Activated CD8-positive, alpha-beta T cell treated with anti-CD3 and anti-CD28 coated beads for 36 hours (primary cell): ENCODE measurements at regions of chr16 and their contacts with region 1.

Region 1: DNA sequence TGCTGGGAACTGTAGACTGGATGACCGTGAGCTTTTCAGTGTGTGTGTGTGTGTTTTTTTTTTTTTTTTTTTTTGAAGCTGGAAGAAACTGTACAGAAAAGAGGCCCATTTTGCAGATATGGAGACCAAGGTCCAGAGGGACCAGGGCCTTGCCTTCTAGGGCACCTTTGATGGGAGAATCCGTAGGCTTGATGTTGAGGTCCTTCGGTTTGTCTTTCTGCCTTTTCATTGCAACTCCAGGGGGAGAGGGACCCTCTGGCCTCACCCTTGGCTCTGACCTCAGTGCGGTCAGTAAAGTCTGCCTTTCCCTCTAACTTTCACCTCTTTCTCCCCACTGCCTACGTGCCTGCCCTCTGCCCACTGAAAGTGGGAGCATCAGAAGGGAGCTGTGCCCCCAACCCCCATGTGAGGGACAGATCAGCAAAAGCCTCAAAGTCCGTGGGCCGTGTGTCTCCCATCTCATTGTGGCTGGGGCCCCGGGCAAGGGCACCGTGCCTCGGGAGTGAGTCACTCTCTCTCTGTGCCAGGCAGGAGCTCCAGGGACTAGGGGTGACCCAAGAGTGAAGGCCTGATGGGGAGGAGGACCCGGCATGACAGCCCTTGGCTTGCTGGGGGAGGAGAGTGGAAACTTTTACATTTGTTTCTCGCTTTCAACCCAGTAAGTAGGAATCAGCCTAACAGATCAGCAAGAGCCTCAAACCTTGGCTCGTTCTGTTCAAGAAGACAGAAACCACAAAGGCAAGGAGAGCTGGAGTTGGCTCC is 123.6 kb downstream of the CMIP start:
- DNase-seq: peak; percentile 83
- ATAC-seq: peak; percentile 97
- H3K4me3 Mint-ChIP-seq: peak overlapping the region; percentile 3
- H3K27ac Mint-ChIP-seq: peak overlapping the region; percentile 89
- H3K4me1 Mint-ChIP-seq: peaks cover 31% of the 10 kb centered on the region
- H3K27me3 Mint-ChIP-seq: no peaks in the 10 kb centered on the region
- CTCF ChIP-seq: no peak

Region 2: GRCh38 chr16:81513204-81514040 is 54.7 kb before region 1 on chr16:
- CTCF ChIA-PET with region 1: no interaction called
- POLR2A ChIA-PET with region 1: no interaction called
- intact Hi-C with region 1: no loop called
- DNase-seq: no peak
- ATAC-seq: no peak
- H3K4me3 Mint-ChIP-seq: no peak overlapping the region
- H3K27ac Mint-ChIP-seq: no peak overlapping the region
- H3K4me1 Mint-ChIP-seq: peaks cover 10% of the 10 kb centered on the region
- H3K27me3 Mint-ChIP-seq: no peaks in the 10 kb centered on the region
- CTCF ChIP-seq: no peak

Region 3: GRCh38 chr16:81632392-81633146 is 64.4 kb after region 1 on chr16:
- CTCF ChIA-PET with region 1: interaction called, 3 read pairs
- POLR2A ChIA-PET with region 1: interaction called, 4 read pairs
- intact Hi-C with region 1: loop called (anchors 2 kb)
- DNase-seq: peak; percentile 94
- ATAC-seq: peak; percentile 83
- H3K4me3 Mint-ChIP-seq: peak overlapping the region; percentile 57
- H3K27ac Mint-ChIP-seq: peak overlapping the region; percentile 96
- H3K4me1 Mint-ChIP-seq: peaks cover 69% of the 10 kb centered on the region
- H3K27me3 Mint-ChIP-seq: no peaks in the 10 kb centered on the region
- CTCF ChIP-seq: no peak